Right cardiac atrium (tissue), 5 donors: ENCODE measurements at regions of chr9 and their contacts with region 1.

Region 1: GRCh38 chr9:108363311-108363710 is 492.5 kb downstream of the ACTL7B start:
- DNase-seq: no peak
- ATAC-seq: no peak
- H3K4me3 ChIP-seq: no peak overlapping the region
- H3K27ac ChIP-seq: no peak overlapping the region
- H3K4me1 ChIP-seq: no peaks in the 10 kb centered on the region
- H3K27me3 ChIP-seq: no peaks in the 10 kb centered on the region

Region 2: DNA sequence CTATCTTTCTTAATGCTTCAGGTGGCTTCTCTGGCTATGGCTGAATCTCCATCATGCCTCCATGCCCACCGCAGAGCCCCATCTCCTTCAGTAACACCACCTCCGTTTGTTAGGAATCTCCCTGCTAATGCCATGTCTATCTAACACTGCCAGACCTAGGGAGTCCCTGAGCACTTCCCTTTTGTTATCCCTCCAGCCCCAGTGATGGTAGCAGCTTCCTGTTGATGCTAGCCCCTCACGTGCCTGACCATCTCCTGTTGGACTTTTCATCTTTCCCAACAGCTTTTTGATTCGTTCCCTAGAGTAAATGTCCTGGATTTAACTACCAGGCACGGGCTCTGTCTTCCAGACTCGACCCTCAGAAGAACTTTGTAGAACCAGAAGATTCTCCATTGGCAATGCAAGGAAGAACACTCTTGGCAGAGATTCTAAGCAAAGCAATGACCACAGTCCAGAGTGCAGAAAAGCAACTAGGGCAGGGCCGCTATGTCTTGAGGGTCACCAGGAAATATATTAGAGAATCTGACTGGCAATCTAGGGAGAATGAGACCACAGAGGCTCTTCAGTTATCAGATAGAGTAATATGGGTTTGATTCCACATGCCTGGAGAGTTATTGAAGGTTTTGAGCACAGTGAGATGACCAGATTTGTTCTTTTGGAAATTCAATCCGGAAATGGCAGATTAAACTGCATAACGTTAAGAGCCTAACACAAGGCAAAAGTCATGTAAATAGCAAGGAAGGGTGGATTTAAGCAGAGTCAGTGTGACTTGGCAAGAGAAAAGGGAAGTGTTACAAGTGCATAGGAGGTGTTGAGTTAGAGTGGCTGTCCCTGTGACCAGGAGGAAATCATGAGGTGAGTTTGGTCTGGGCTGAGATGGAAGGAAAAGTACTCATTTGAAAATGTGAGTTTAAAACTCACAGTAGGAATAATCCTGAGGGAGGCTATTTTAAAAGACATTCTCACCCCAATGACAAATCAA is 62.7 kb before region 1 on chr9:
- intact Hi-C with region 1: loop called in 1 of 4 experiments (anchors 10 kb)
- DNase-seq: no peak
- ATAC-seq: peak; percentile 48 to 76
- H3K4me3 ChIP-seq: no peak overlapping the region
- H3K27ac ChIP-seq: no peak overlapping the region
- H3K4me1 ChIP-seq: no peaks in the 10 kb centered on the region
- H3K27me3 ChIP-seq: no peaks in the 10 kb centered on the region